ENCODE measurements at regions of chr1 and their contacts with region 1.

Region 1: GRCh38 chr1:55375617-55376258 is 160.6 kb upstream of the USP24 start:
- DNase-seq: peak; percentile 55 to 70 (median 64)
- ATAC-seq: peak; percentile 83
- H3K4me3 ChIP-seq: no peak overlapping the region
- H3K27ac ChIP-seq: no peak overlapping the region
- H3K4me1 ChIP-seq: no peaks in the 10 kb centered on the region
- H3K27me3 ChIP-seq: no peaks in the 10 kb centered on the region
- CTCF ChIP-seq: peak; percentile 59 to 88 (median 79)
- EP300 ChIP-seq: no peak
- POLR2A ChIP-seq: no peak
- RAD21 ChIP-seq: peak; percentile 54 to 72

Region 2: DNA sequence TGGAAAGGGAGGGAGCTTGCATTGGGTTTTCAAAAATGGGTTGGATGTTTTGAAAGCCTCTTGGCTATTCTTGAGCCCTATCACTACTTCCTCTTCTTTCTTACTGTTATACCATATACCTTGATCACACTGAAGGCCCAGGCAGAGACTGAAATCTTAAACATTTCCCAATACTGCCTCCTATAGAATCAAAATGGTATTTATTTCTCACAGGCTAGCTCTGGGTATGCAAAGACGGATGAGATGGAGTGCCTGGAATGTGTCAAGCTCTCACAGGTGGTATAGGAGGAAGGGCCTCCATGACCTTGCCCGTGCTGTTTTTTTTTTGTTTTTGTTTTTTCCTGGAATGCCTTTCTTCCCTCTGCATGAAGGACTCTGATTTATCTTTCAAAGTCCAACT is 107.8 kb after region 1 on chr1:
- CTCF ChIA-PET with region 1: interaction called, 7 read pairs
- POLR2A ChIA-PET with region 1: no interaction called
- in situ Hi-C with region 1: loop called (anchors 10 kb)
- intact Hi-C with region 1: loop called (anchors 1 kb)
- DNase-seq: peak; percentile 16 to 22 (median 18)
- ATAC-seq: peak; percentile 93
- H3K4me3 ChIP-seq: no peak overlapping the region
- H3K27ac ChIP-seq: no peak overlapping the region
- H3K4me1 ChIP-seq: no peaks in the 10 kb centered on the region
- H3K27me3 ChIP-seq: no peaks in the 10 kb centered on the region
- CTCF ChIP-seq: peak; percentile 22 to 74 (median 40); a peak in 5 of 6 replicates
- EP300 ChIP-seq: no peak
- POLR2A ChIP-seq: no peak
- RAD21 ChIP-seq: peak; percentile 72 to 77

Region 3: GRCh38 chr1:55893155-55893554 is 517.4 kb after region 1 on chr1:
- CTCF ChIA-PET with region 1: no interaction called
- POLR2A ChIA-PET with region 1: no interaction called
- in situ Hi-C with region 1: no loop called
- intact Hi-C with region 1: loop called (anchors 5 kb)
- DNase-seq: peak in 1 of 4 experiments; percentile 7
- ATAC-seq: no peak
- H3K4me3 ChIP-seq: no peak overlapping the region
- H3K27ac ChIP-seq: no peak overlapping the region
- H3K4me1 ChIP-seq: no peaks in the 10 kb centered on the region
- H3K27me3 ChIP-seq: no peaks in the 10 kb centered on the region
- CTCF ChIP-seq: peak in 1 of 3 experiments; percentile 19; a peak in 1 of 6 replicates
- EP300 ChIP-seq: no peak
- POLR2A ChIP-seq: no peak
- RAD21 ChIP-seq: peak; percentile 19 to 42; a peak in 2 of 4 replicates

Region 4: DNA sequence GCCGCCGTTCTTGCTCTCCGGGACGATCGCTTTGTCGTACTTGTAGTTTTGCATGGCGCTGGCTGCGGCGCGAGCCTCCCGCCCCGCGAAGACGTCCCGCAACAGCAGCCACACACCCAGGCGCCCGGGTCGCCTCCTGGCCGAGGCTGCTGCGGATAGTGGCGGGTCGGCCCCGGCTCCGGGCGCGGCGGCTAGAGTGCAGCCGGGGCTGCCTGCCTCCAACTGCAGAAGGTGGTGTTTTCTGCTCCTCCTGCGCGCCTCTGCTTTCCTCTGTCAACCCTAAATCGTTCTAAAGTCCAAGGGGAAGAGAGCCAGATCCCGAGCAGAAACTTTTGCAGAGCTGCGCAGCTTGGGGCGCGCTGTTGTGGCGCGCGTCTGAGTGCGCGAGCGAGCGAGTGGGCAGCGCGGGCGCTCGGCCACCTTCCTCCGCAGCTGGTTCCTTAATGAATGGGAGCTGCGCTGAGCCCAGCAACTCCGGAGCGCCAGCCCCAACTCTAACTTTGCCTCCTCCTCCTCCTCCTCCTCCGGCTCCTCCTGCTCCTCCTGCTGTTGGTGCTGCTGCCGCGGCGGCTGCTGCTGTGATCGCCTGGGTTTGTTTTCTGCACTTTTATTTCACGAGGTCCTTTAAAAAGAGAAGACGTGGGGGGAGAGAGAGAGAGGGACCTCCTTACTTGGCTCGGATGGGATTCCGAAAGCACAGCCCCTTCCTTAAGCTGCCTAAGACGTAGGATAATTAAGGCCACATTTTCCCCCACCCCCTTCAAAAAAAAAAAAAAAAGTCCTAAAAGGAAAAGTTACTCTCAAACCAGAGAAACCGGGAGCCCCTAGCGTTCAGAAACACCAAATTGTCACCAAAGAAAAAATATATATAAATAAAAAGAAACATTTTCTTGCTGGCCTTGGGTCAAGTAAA is 1203.5 kb after region 1 on chr1 and contains the start of gene PLPP3:
- CTCF ChIA-PET with region 1: no interaction called
- POLR2A ChIA-PET with region 1: no interaction called
- in situ Hi-C with region 1: loop called (anchors 25 kb)
- intact Hi-C with region 1: loop called (anchors 2 kb)
- DNase-seq: peak in 3 of 4 experiments; percentile 15 to 27 (median 16)
- ATAC-seq: no peak; the same call in 2 of the 3 replicates
- H3K4me3 ChIP-seq: no peak within 1 kb of the TSS
- H3K27ac ChIP-seq: no peak within 1 kb of the TSS
- H3K4me1 ChIP-seq: peaks cover 0 to 13% of the 10 kb centered on the region in 2 experiments; a peak in 1 of 5 replicates
- H3K27me3 ChIP-seq: peaks cover 4 to 19% of the 10 kb centered on the region in 2 experiments; a peak in 3 of 5 replicates
- CTCF ChIP-seq: peak in 2 of 3 experiments; percentile 17 to 47; a peak in 3 of 6 replicates
- EP300 ChIP-seq: no peak
- POLR2A ChIP-seq: no peak
- RAD21 ChIP-seq: no peak
- polyA plus RNA-seq, gene PLPP3: 0.13 to 0.35 TPM

Region 5: GRCh38 chr1:56584910-56585528 is 1209.3 kb after region 1 on chr1:
- CTCF ChIA-PET with region 1: no interaction called
- POLR2A ChIA-PET with region 1: interaction called, 3 read pairs
- in situ Hi-C with region 1: loop called (anchors 25 kb)
- intact Hi-C with region 1: loop called (anchors 2 kb)
- DNase-seq: peak; percentile 37 to 49 (median 48)
- ATAC-seq: peak; percentile 70; the same call in 2 of the 3 replicates
- H3K4me3 ChIP-seq: no peak overlapping the region
- H3K27ac ChIP-seq: no peak overlapping the region
- H3K4me1 ChIP-seq: no peaks in the 10 kb centered on the region
- H3K27me3 ChIP-seq: no peaks in the 10 kb centered on the region; a peak in 1 of 5 replicates
- CTCF ChIP-seq: peak; percentile 46 to 79 (median 65); a peak in 5 of 6 replicates
- EP300 ChIP-seq: no peak
- POLR2A ChIP-seq: no peak
- RAD21 ChIP-seq: peak; percentile 88 to 89

Region 6: GRCh38 chr1:56821140-56821797 is 1445.5 kb after region 1 on chr1:
- CTCF ChIA-PET with region 1: no interaction called
- POLR2A ChIA-PET with region 1: no interaction called
- in situ Hi-C with region 1: no loop called
- intact Hi-C with region 1: loop called (anchors 5 kb)
- DNase-seq: peak; percentile 80 to 85 (median 81)
- ATAC-seq: peak; percentile 99
- H3K4me3 ChIP-seq: no peak overlapping the region
- H3K27ac ChIP-seq: no peak overlapping the region
- H3K4me1 ChIP-seq: no peaks in the 10 kb centered on the region
- H3K27me3 ChIP-seq: peaks cover 0 to 8% of the 10 kb centered on the region in 2 experiments; a peak in 2 of 5 replicates
- CTCF ChIP-seq: peak; percentile 82 to 94 (median 88)
- EP300 ChIP-seq: no peak
- POLR2A ChIP-seq: no peak
- RAD21 ChIP-seq: peak; percentile 47 to 80